Activated T-helper 2 cell treated with anti-CD3 and anti-CD28 coated beads, Interferon-gamma antibody, Interleukin-2, Interleukin-4, amounts not matched to agents 10 μg/mL and 5 μg/mL and 100 μg/mL, durations not matched to agents 14 hours and 24 hours and 36 hours (primary cell): ENCODE measurements at regions of chr7 and their contacts with region 1.

Region 1: GRCh38 chr7:23013715-23014649 is at the start of gene HYCC1:
- DNase-seq: peak; percentile 99
- H3K4me3 Mint-ChIP-seq: peak within 1 kb of the TSS; percentile 89
- H3K27ac Mint-ChIP-seq: peak within 1 kb of the TSS; percentile 85
- H3K4me1 Mint-ChIP-seq: peaks cover 33% of the 10 kb centered on the region
- H3K27me3 Mint-ChIP-seq: no peaks in the 10 kb centered on the region
- total RNA-seq, gene HYCC1: 49.9 and 55.1 TPM in 2 replicates

Region 2: DNA sequence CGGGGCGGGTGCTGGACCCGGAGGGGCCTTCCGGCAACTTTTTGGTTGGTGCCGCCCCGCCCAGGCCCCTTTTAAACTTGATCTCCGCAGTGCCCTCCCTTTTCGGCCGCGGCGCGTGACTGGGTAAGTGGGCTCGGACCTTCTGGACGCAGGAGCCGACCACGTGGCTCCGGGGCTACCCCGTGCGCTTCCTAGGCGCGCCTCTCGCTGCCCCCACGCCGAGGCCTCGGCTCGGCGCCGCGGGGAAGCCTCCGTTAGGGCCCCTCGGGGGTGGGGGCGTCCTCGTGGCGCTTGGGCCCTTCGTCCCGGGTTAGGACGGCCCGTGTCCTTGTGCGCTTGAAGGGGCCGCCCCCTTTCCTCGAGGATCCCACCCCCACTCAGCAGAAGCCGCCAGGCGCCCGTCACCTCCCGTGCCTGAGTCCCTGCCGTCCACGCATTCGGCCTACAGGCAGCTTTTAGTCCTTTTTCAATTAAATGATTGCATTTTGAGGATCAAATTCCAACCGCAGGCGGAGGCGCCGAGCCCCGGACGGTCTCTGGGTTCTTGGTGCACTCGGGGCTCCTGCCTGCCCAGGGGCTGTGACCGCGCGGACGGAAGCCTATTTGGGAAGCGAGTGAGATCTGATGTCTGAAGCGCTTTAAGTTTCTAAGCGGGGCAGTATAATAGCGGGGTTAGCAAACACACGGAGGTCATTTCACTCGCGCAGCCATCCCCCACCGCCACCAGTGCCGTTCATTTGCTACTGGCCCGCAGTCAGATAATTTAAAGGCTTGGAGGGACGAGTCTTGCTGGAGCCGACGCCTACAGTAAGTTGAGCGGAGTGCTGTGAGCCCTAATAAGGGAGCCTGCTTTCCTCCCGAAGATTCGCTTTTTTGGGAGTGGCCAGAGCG is 159.6 kb before region 1 on chr7:
- intact Hi-C with region 1: loop called (anchors 2 kb)
- DNase-seq: peak; percentile 74
- H3K4me3 Mint-ChIP-seq: peak overlapping the region; percentile 95
- H3K27ac Mint-ChIP-seq: peak overlapping the region; percentile 94
- H3K4me1 Mint-ChIP-seq: peaks cover 31% of the 10 kb centered on the region
- H3K27me3 Mint-ChIP-seq: no peaks in the 10 kb centered on the region

Region 3: DNA sequence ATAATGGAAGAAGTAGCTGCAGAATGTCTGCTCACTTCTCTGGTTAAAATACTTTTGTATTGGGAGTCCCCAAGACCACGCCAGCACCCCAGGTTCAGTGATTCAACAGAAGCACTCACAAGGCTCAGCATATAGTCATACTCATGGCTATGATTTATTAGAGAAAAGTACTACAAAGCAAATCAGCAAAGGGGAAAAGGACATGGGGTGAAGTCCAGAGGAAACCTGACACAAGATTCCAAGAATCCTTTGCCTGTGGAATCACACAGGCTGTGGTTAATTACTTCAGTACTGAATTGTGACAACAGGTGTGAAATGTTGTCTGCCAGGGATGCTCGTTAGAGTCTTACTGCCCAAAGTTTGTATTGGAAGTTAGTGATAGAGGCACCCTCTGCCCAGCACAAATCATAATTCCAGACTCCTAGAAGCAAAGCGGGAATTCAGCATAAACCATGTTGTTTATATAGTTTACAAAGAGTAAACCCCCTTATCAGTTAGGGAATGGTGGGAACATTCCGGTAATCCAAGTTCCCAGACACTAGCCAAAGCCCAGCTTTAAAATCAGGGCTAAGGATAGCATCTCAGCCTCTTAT is 79.4 kb before region 1 on chr7:
- intact Hi-C with region 1: loop called (anchors 2 kb)
- DNase-seq: no peak
- H3K4me3 Mint-ChIP-seq: no peak overlapping the region
- H3K27ac Mint-ChIP-seq: no peak overlapping the region
- H3K4me1 Mint-ChIP-seq: no peaks in the 10 kb centered on the region
- H3K27me3 Mint-ChIP-seq: peaks cover 5% of the 10 kb centered on the region

Region 4: GRCh38 chr7:23000597-23001360 is 13.2 kb before region 1 on chr7:
- intact Hi-C with region 1: loop called (anchors 1 kb)
- DNase-seq: no peak
- H3K4me3 Mint-ChIP-seq: no peak overlapping the region
- H3K27ac Mint-ChIP-seq: peak overlapping the region; percentile 58
- H3K4me1 Mint-ChIP-seq: peaks cover 56% of the 10 kb centered on the region
- H3K27me3 Mint-ChIP-seq: no peaks in the 10 kb centered on the region

Region 5: DNA sequence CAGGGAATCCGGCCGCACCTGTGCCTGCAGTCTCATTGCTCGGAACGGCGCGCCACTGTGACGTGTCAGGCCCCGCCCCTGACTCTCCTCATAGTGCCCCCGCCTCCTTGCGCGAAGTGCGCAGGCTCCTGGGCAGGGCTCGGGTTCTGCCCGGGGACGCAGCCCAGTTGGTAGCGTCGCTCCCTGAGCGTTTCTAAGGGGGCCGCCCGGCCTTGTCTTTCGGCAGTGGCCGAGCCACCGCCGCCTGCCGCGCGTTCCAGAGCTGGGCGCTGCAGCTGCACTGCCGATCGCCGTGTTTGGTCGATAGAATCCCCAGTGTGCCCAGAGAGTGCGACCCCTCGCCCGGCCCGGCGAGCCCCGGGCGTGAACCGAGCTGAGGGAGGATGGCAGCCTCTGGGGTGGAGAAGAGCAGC is 91.7 kb after region 1 on chr7 and contains the start of gene KLHL7:
- intact Hi-C with region 1: loop called (anchors 1 kb)
- DNase-seq: peak; percentile 94
- H3K4me3 Mint-ChIP-seq: peak within 1 kb of the TSS; percentile 93
- H3K27ac Mint-ChIP-seq: peak within 1 kb of the TSS; percentile 93
- H3K4me1 Mint-ChIP-seq: peaks cover 30% of the 10 kb centered on the region
- H3K27me3 Mint-ChIP-seq: no peaks in the 10 kb centered on the region
- total RNA-seq, gene KLHL7: 20.2 and 21.6 TPM in 2 replicates